Activated naive CD4-positive, alpha-beta T cell treated with anti-CD3 and anti-CD28 coated beads for 36 hours (primary cell): ENCODE measurements at regions of chr2 and their contacts with region 1.

Region 1: DNA sequence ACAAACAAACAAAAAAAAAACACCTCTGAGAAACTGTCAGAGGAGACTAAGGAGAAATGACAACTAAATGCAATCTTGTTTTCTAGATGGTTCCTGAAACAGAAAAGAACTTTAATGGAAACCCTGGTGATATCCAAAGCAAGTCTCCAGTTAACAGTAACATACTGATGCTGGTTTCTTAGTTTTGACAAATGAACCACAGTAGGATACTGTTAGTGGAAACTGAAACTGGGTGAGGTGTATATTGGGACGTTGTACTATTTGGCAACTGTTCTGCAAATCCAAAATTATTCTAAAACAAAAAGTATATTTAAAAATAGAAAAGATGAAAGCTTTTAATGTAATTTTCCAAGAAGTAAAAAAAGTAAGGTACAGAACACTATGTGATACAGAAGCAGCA is 11.4 kb downstream of the SESTD1 start:
- DNase-seq: no peak
- H3K4me3 Mint-ChIP-seq: no peak overlapping the region
- H3K27ac Mint-ChIP-seq: no peak overlapping the region
- H3K4me1 Mint-ChIP-seq: peaks cover 40% of the 10 kb centered on the region
- H3K27me3 Mint-ChIP-seq: peaks cover 4% of the 10 kb centered on the region

Region 2: GRCh38 chr2:179106676-179107428 is 146.4 kb before region 1 on chr2:
- CTCF ChIA-PET with region 1: no interaction called
- intact Hi-C with region 1: loop called (anchors 5 kb)
- DNase-seq: peak; percentile 21
- H3K4me3 Mint-ChIP-seq: no peak overlapping the region
- H3K27ac Mint-ChIP-seq: no peak overlapping the region
- H3K4me1 Mint-ChIP-seq: peaks cover 30% of the 10 kb centered on the region
- H3K27me3 Mint-ChIP-seq: no peaks in the 10 kb centered on the region

Region 3: GRCh38 chr2:179239195-179239594 is 14.0 kb before region 1 on chr2:
- CTCF ChIA-PET with region 1: interaction called, 3 read pairs
- intact Hi-C with region 1: loop called (anchors 1 kb)
- DNase-seq: no peak
- H3K4me3 Mint-ChIP-seq: no peak overlapping the region
- H3K27ac Mint-ChIP-seq: no peak overlapping the region
- H3K4me1 Mint-ChIP-seq: peaks cover 27% of the 10 kb centered on the region
- H3K27me3 Mint-ChIP-seq: peaks cover 2% of the 10 kb centered on the region